ENCODE measurements at regions of chr20 and their contacts with region 1.

Region 1: GRCh38 chr20:43590392-43591323 is at the start of gene IFT52:
- DNase-seq: peak; percentile 97
- H3K4me3 ChIP-seq: peak within 1 kb of the TSS; percentile 67 to 82 (median 76)
- H3K27ac ChIP-seq: peak within 1 kb of the TSS; percentile 76 to 90 (median 82)
- H3K4me1 ChIP-seq: peaks cover 0 to 22% (median 18%) of the 10 kb centered on the region in 4 donors
- H3K27me3 ChIP-seq: no peaks in the 10 kb centered on the region
- CTCF ChIP-seq: no peak
- EP300 ChIP-seq: peak in 1 of 4 donors; percentile 37
- POLR2A ChIP-seq: peak in 1 of 2 donors; percentile 24
- total RNA-seq, gene IFT52: 26.4 to 46.3 (median 29.8) TPM

Region 2: GRCh38 chr20:43456809-43457639 is 133.6 kb before region 1 on chr20:
- intact Hi-C with region 1: loop called (anchors 2 kb)
- DNase-seq: peak; percentile 97
- H3K4me3 ChIP-seq: peak overlapping the region; percentile 86 to 98 (median 92)
- H3K27ac ChIP-seq: peak overlapping the region; percentile 99 to 100 (median 100)
- H3K4me1 ChIP-seq: peaks cover 0 to 28% (median 20%) of the 10 kb centered on the region in 4 donors
- H3K27me3 ChIP-seq: no peaks in the 10 kb centered on the region
- CTCF ChIP-seq: no peak
- EP300 ChIP-seq: no peak
- POLR2A ChIP-seq: no peak

Region 3: GRCh38 chr20:43537921-43538877 is 52.5 kb before region 1 on chr20:
- intact Hi-C with region 1: loop called (anchors 2 kb)
- DNase-seq: no peak
- H3K4me3 ChIP-seq: no peak overlapping the region
- H3K27ac ChIP-seq: no peak overlapping the region
- H3K4me1 ChIP-seq: no peaks in the 10 kb centered on the region
- H3K27me3 ChIP-seq: no peaks in the 10 kb centered on the region
- CTCF ChIP-seq: peak; percentile 45 to 89 (median 77)
- EP300 ChIP-seq: no peak
- POLR2A ChIP-seq: no peak

Region 4: DNA sequence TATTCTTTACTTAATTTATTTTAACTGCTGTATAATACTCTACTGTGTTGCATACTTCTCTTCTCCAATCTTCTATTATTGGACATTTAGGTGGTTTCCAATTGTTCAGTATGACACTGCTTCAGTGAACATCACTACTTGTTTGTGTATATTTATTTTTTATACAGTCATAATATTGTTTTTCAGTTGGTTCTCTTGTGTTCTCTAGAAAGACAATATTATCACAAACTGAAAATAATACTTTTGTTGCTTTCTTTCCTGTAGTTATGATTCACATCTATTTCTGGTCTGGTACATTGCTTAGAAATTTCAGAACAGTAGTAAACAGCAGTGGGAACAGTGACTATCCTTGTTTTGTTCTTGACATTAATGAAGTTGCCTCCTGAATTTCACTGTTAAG is 198.9 kb after region 1 on chr20:
- intact Hi-C with region 1: no loop called
- DNase-seq: no peak
- H3K4me3 ChIP-seq: no peak overlapping the region
- H3K27ac ChIP-seq: no peak overlapping the region
- H3K4me1 ChIP-seq: no peaks in the 10 kb centered on the region
- H3K27me3 ChIP-seq: no peaks in the 10 kb centered on the region
- CTCF ChIP-seq: no peak
- EP300 ChIP-seq: no peak
- POLR2A ChIP-seq: no peak